HEK293 (cell line): ENCODE measurements at regions of chr15 and their contacts with region 1.

Region 1: GRCh38 chr15:59528965-59529402 is 82.6 kb upstream of the GCNT3 start:
- H3K4me3 ChIP-seq: no peak overlapping the region
- H3K27ac ChIP-seq: no peak overlapping the region
- H3K4me1 ChIP-seq: no peaks in the 10 kb centered on the region
- CTCF ChIP-seq: peak; percentile 68

Region 2: GRCh38 chr15:58227706-58228543 is 1301.1 kb before region 1 on chr15:
- CTCF ChIA-PET with region 1: interaction called, 10 read pairs
- POLR2A ChIA-PET with region 1: no interaction called
- H3K4me3 ChIP-seq: no peak overlapping the region
- H3K27ac ChIP-seq: no peak overlapping the region
- H3K4me1 ChIP-seq: no peaks in the 10 kb centered on the region
- CTCF ChIP-seq: peak; percentile 30; the same call in 1 of the 2 replicates

Region 3: GRCh38 chr15:59313641-59314332 is 215.2 kb before region 1 on chr15:
- CTCF ChIA-PET with region 1: no interaction called
- POLR2A ChIA-PET with region 1: no interaction called
- H3K4me3 ChIP-seq: no peak overlapping the region
- H3K27ac ChIP-seq: 0 out of 2 replicates have a peak overlapping the region, but pooled peaks have one; percentile 1
- H3K4me1 ChIP-seq: peaks cover 6% of the 10 kb centered on the region
- CTCF ChIP-seq: no peak

Region 4: DNA sequence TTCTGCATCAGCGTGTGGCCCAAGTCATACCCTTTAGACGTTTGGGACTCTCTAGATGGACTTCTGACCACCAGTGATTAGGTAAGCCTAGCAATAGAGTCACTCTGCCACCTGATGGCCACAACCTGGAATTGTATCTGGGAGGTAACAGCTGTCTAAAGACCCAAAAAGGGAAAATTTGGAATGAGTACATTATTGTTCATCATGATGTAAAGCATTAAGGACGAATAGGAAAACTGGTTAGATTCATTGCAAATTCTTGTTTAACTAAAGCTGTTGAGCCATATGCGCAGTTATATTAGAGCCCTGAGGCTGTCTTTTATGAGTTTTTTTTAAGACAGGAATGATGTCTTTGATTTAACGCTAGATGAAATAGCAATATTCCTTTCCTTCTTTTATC is 27.4 kb before region 1 on chr15:
- CTCF ChIA-PET with region 1: interaction called, 17 read pairs
- POLR2A ChIA-PET with region 1: no interaction called
- H3K4me3 ChIP-seq: no peak overlapping the region
- H3K27ac ChIP-seq: no peak overlapping the region
- H3K4me1 ChIP-seq: no peaks in the 10 kb centered on the region
- CTCF ChIP-seq: no peak

Region 5: DNA sequence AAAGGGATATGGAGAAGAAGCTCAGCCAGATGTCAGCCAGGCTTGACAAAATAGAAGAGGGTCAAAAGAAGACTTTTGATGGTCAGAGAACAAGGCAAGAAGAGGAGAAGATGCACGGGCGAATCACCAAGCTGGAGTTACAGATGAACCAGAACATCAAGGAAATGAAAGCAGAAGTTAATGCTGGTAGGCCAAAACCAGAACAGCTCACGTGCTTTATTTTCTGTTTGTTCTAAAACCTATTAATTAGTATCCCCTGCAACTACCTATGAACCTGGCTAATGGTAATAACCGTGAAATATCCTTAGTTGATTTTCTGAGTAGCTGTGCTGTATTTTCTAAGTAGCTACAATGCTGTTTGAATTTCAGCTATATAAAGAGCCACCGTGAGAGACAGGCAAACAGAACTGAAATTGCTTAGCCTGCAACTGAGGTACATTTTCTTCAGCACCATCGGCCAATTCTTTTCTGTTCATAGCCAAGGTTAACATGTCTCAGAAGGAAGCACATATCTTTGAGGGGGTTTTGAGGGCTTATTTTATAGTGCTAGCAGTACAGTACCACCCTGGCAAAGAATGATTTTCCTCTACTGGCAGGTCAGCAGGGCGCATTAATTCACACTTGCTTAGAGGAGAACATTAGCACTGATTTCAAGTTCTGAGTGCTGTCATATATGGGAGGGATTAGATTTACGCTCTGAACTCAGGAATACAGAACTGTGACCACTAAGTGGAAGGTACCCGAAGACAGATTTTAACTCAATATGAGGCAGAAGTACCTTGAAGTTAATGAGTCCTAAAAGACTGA is 12.1 kb before region 1 on chr15:
- CTCF ChIA-PET with region 1: interaction called, 25 read pairs
- POLR2A ChIA-PET with region 1: no interaction called
- H3K4me3 ChIP-seq: no peak overlapping the region
- H3K27ac ChIP-seq: no peak overlapping the region
- H3K4me1 ChIP-seq: no peaks in the 10 kb centered on the region
- CTCF ChIP-seq: no peak

Region 6: GRCh38 chr15:59619406-59619805 is 90.4 kb after region 1 on chr15:
- CTCF ChIA-PET with region 1: interaction called, 14 read pairs
- POLR2A ChIA-PET with region 1: no interaction called
- H3K4me3 ChIP-seq: no peak overlapping the region
- H3K27ac ChIP-seq: no peak overlapping the region
- H3K4me1 ChIP-seq: no peaks in the 10 kb centered on the region
- CTCF ChIP-seq: no peak

Region 7: GRCh38 chr15:59632714-59633113 is 103.7 kb after region 1 on chr15:
- CTCF ChIA-PET with region 1: interaction called, 39 read pairs
- POLR2A ChIA-PET with region 1: no interaction called
- H3K4me3 ChIP-seq: no peak overlapping the region
- H3K27ac ChIP-seq: no peak overlapping the region
- H3K4me1 ChIP-seq: no peaks in the 10 kb centered on the region
- CTCF ChIP-seq: no peak

Region 8: GRCh38 chr15:59642351-59642750 is 113.4 kb after region 1 on chr15:
- CTCF ChIA-PET with region 1: interaction called, 39 read pairs
- POLR2A ChIA-PET with region 1: no interaction called
- H3K4me3 ChIP-seq: no peak overlapping the region
- H3K27ac ChIP-seq: no peak overlapping the region
- H3K4me1 ChIP-seq: no peaks in the 10 kb centered on the region
- CTCF ChIP-seq: no peak